HepG2 (cell line): ENCODE measurements at regions of chr15 and their contacts with region 1.

Region 1: GRCh38 chr15:67542420-67543347 is at the start of gene MAP2K5:
- DNase-seq: peak; percentile 48
- ATAC-seq: peak; percentile 85
- H3K4me3 ChIP-seq: peak within 1 kb of the TSS; percentile 76 to 99 (median 84)
- H3K27ac ChIP-seq: peak within 1 kb of the TSS; percentile 76
- H3K4me1 ChIP-seq: peaks cover 25% of the 10 kb centered on the region
- H3K27me3 ChIP-seq: no peaks in the 10 kb centered on the region; a peak in 1 of 5 replicates
- CTCF ChIP-seq: peak; percentile 26; the same call in 1 of the 2 replicates
- EP300 ChIP-seq: no peak
- POLR2A ChIP-seq: peak; percentile 70 to 81
- RAD21 ChIP-seq: no peak
- total RNA-seq, gene MAP2K5: 4.3 and 6.3 TPM in 2 replicates

Region 2: DNA sequence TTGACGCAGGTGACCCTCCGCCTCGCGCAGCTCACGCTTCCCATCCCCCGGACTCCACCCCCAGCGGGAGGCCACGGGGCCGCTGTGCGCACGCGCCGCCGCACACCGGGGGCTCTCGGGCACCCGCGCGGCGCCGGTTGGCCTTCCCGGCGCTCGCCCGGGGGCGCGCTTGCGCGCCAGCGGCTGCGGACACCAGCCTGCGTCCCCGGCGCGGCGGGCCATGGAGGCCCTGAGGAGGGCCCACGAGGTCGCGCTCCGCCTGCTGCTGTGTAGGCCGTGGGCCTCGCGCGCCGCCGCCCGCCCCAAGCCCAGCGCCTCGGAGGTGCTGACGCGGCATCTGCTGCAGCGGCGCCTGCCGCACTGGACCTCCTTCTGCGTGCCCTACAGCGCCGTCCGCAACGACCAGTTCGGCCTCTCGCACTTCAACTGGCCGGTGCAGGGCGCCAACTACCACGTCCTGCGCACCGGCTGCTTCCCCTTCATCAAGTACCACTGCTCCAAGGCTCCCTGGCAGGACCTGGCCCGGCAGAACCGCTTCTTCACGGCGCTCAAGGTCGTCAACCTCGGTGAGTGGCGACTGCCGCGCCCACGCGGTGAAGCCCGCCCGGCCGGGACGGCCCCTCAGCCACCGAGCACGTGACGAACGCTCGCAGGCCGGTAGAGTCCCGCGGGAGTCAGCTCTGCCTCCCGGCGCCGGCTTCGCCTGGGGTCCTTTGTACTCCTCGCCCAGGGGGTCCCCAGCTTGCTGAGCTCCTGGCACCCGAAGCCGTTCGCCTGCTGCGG is 21.5 kb before region 1 on chr15 and contains the start of gene C15orf61:
- CTCF ChIA-PET with region 1: no interaction called
- POLR2A ChIA-PET with region 1: interaction called, 31 read pairs
- in situ Hi-C with region 1: no loop called
- intact Hi-C with region 1: no loop called
- DNase-seq: peak; percentile 83
- ATAC-seq: peak; percentile 91
- H3K4me3 ChIP-seq: peak within 1 kb of the TSS; percentile 75 to 89 (median 83)
- H3K27ac ChIP-seq: peak within 1 kb of the TSS; percentile 99
- H3K4me1 ChIP-seq: peaks cover 35% of the 10 kb centered on the region
- H3K27me3 ChIP-seq: no peaks in the 10 kb centered on the region
- CTCF ChIP-seq: peak; percentile 38; the same call in 1 of the 2 replicates
- EP300 ChIP-seq: no peak
- POLR2A ChIP-seq: peak; percentile 66 to 83; a peak in 3 of 4 replicates
- RAD21 ChIP-seq: peak; percentile 55
- total RNA-seq, gene C15orf61: 3.3 and 6.6 TPM in 2 replicates